Mammary epithelial cell (primary cell): ENCODE measurements at regions of chr1 and their contacts with region 1.

Region 1: GRCh38 chr1:40143891-40144575 is 17.2 kb upstream of the RLF start:
- DNase-seq: peak; percentile 66
- H3K4me3 ChIP-seq: no peak overlapping the region
- H3K27ac ChIP-seq: no peak overlapping the region
- H3K4me1 ChIP-seq: no peaks in the 10 kb centered on the region
- H3K27me3 ChIP-seq: no peaks in the 10 kb centered on the region
- CTCF ChIP-seq: peak; percentile 82 to 86

Region 2: GRCh38 chr1:40079774-40080400 is 64.1 kb before region 1 on chr1:
- CTCF ChIA-PET with region 1: interaction called, 4 read pairs
- dilution Hi-C with region 1: no loop called
- in situ Hi-C with region 1: no loop called
- intact Hi-C with region 1: loop called (anchors 2 kb)
- DNase-seq: no peak
- H3K4me3 ChIP-seq: no peak overlapping the region
- H3K27ac ChIP-seq: no peak overlapping the region
- H3K4me1 ChIP-seq: peaks cover 7% of the 10 kb centered on the region
- H3K27me3 ChIP-seq: no peaks in the 10 kb centered on the region
- CTCF ChIP-seq: no peak

Region 3: DNA sequence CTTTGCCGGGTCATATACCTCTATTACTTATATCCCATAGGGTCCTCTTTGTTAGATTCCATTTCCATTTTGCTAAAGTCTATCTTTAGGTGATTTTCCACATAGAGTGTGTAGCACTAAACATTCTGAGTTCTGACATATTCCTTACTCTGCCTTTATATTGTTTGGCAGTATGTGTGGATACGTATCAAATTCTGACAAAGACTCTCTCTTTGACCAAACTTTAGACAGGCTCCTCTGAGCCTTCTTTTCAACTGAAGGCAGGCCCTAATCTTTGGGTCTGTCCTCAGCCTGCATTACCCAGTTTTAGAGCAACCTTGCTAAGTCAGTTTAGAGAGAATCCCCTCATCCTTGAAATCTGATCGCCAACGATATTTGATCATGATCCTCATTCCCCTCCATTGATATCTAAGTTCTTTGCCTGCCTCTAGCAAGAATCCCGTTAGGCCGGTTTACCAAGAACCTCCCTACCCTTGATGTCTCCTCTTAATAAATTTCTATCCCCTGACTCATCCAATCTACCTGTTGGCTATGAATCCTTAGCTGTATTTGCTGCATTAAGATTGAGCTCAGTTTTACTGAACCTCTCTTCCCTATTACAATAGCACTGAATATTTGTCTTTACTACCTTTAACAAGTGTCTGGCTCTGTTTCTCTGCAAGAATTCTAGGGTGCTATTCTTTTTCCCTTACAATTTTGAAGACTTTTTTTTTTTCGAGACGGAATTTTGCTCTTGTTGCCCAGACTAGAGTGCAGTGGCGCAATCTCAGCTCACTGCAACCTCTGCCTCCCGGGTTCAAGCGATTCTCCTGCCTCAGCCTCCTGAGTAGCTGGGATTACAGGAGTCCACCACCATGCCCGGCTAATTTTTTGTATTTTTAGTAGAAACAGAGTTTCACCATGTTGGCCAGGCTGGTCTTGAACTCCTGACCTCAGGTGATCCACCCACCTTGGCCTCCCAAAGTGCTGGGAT is 36.5 kb before region 1 on chr1:
- CTCF ChIA-PET with region 1: no interaction called
- dilution Hi-C with region 1: no loop called
- in situ Hi-C with region 1: no loop called
- intact Hi-C with region 1: no loop called
- DNase-seq: peak; percentile 83
- H3K4me3 ChIP-seq: peak overlapping the region in 1 of 3 experiments; percentile 14
- H3K27ac ChIP-seq: peak overlapping the region; percentile 21
- H3K4me1 ChIP-seq: peaks cover 8% of the 10 kb centered on the region
- H3K27me3 ChIP-seq: no peaks in the 10 kb centered on the region
- CTCF ChIP-seq: no peak

Region 4: DNA sequence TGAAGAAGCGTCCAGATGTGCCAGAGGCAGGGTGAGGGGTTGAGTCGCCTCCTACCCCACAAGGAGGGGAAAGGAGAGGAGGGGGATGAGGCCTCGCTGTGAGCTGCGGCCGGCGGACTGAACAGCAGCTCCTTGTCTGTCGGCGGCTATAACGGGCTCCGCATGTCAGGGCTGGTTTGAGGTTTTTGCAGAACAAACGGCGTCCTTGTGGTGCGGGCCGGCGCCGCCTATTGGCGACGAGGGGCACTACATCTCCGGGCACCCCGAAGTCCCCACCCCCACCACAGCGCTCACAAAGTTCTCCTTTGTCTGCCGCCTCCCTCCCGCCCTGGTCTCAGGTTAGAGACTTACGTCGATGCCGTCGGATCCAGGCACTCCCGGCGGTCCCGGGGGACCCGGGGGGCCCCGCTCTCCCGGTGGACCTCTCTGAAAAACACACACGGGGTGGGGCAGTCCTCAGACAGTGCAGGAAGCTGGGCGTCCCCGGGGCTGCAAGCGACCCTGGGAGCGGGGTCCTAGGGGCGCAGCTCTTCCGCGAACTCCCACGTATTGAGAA is 171.3 kb after region 1 on chr1:
- CTCF ChIA-PET with region 1: interaction called, 10 read pairs
- dilution Hi-C with region 1: no loop called
- in situ Hi-C with region 1: no loop called
- intact Hi-C with region 1: no loop called
- DNase-seq: peak; percentile 80
- H3K4me3 ChIP-seq: peak overlapping the region in 2 of 3 experiments; percentile 32 to 38
- H3K27ac ChIP-seq: no peak overlapping the region
- H3K4me1 ChIP-seq: peaks cover 20% of the 10 kb centered on the region
- H3K27me3 ChIP-seq: peaks cover 14% of the 10 kb centered on the region
- CTCF ChIP-seq: peak; percentile 77 to 92

Region 5: GRCh38 chr1:40338745-40339424 is 194.9 kb after region 1 on chr1:
- CTCF ChIA-PET with region 1: interaction called, 15 read pairs
- dilution Hi-C with region 1: no loop called
- in situ Hi-C with region 1: loop called in 1 of 2 experiments (anchors 5 kb)
- intact Hi-C with region 1: loop called (anchors 1 kb)
- DNase-seq: peak; percentile 60
- H3K4me3 ChIP-seq: no peak overlapping the region
- H3K27ac ChIP-seq: no peak overlapping the region
- H3K4me1 ChIP-seq: peaks cover 3% of the 10 kb centered on the region
- H3K27me3 ChIP-seq: no peaks in the 10 kb centered on the region
- CTCF ChIP-seq: peak; percentile 99 to 100

Region 6: DNA sequence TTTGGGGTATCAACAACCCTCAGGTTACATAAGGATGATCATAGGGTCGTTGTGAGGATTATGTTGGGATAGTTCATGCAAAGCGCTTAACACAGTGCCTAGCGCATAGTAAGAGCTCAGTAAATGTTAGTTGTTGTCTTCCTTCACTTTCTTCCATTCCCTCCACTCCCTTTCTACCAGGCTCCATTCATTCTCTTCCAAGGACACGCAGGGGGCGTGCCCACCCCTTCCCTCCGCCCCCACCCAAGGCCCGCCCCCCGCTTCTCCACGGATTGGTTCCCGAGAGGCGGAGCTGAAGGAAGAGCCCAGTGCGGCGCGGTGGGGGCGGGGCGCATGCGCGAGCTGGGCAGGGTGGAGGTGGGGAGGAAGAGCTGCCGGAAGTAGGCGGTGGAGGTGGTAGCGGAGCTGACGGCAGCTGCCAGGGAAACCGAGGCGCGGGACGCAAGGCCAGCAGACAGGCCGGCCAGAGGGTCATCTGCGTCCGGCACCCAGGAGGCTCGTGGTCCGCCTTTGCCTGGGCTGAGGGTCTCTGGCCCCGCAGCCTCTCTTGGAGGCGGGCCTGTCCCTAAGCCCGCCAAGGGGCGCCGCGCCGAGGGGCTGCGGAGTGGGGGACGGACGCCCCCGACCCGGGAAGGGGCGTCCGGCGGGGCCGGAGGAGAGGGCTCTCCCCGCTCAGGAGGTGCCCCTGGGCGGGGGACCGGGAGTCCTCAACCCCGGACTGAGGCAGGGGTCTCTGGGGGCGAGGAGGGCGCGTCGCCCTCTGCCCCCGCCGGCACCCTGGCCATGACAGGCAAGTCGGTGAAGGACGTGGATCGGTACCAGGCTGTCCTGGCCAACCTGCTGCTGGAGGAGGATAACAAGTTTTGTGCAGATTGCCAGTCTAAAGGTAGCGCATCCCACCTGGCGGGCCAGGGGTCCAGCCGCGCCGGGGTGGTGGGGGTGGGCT is 229.6 kb after region 1 on chr1 and contains the start of gene SMAP2:
- CTCF ChIA-PET with region 1: interaction called, 15 read pairs
- dilution Hi-C with region 1: no loop called
- in situ Hi-C with region 1: no loop called
- intact Hi-C with region 1: no loop called
- DNase-seq: peak; percentile 95
- H3K4me3 ChIP-seq: peak within 1 kb of the TSS; percentile 65 to 80 (median 71)
- H3K27ac ChIP-seq: peak within 1 kb of the TSS; percentile 65
- H3K4me1 ChIP-seq: peaks cover 12% of the 10 kb centered on the region
- H3K27me3 ChIP-seq: no peaks in the 10 kb centered on the region
- CTCF ChIP-seq: no peak
- total RNA-seq, gene SMAP2: 17.5 to 20.5 TPM

Region 7: DNA sequence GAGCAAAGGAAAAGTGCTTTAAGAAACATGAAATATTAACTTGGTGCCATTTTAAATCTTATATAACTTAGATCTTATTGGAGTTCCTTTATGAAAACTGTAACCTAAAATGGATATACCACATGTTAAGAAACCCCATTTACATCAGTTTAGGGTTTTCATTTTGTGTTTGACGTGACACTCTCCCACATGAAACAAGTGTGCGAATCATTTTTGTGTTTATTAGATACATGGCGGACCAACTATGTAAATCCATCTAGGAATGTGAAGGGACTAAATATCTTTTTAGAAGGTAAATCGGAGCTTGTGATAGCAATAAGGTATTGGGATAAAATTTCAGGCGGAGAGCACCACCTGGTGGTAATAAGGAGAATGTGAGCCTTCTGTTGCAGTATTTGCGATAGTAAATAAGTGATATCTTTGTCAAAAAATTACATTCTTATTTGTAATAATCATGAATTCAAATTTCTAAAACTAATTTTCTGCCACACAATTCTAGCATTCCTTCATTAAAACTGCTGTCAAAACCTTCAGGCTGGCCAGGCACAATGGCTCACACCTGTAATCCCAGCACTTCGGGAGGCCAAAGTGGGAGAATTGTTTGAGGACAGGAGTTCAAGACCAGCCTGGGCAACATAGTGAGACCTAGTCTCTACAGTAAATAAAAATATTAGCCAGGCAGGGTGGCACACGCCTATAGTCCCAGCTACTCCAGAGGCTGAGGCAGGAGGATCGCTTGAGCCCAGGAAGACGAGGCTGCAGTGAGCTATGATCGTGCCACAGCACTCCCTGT is 260.8 kb after region 1 on chr1:
- CTCF ChIA-PET with region 1: interaction called, 15 read pairs
- dilution Hi-C with region 1: no loop called
- in situ Hi-C with region 1: loop called in 1 of 2 experiments (anchors 5 kb)
- intact Hi-C with region 1: loop called (anchors 2 kb)
- DNase-seq: peak; percentile 30
- H3K4me3 ChIP-seq: no peak overlapping the region
- H3K27ac ChIP-seq: no peak overlapping the region
- H3K4me1 ChIP-seq: no peaks in the 10 kb centered on the region
- H3K27me3 ChIP-seq: no peaks in the 10 kb centered on the region
- CTCF ChIP-seq: peak; percentile 72 to 79

Region 8: GRCh38 chr1:40438391-40439015 is 294.5 kb after region 1 on chr1:
- CTCF ChIA-PET with region 1: interaction called, 3 read pairs
- dilution Hi-C with region 1: no loop called
- in situ Hi-C with region 1: no loop called
- intact Hi-C with region 1: loop called (anchors 1 kb)
- DNase-seq: no peak
- H3K4me3 ChIP-seq: no peak overlapping the region
- H3K27ac ChIP-seq: no peak overlapping the region
- H3K4me1 ChIP-seq: no peaks in the 10 kb centered on the region
- H3K27me3 ChIP-seq: no peaks in the 10 kb centered on the region
- CTCF ChIP-seq: peak; percentile 74 to 82